Mammary epithelial cell (primary cell): ENCODE measurements at regions of chr4 and their contacts with region 1.

Region 1: GRCh38 chr4:100268789-100269188 is 78.5 kb upstream of the DDIT4L start:
- DNase-seq: no peak
- H3K4me3 ChIP-seq: no peak overlapping the region
- H3K27ac ChIP-seq: no peak overlapping the region
- H3K4me1 ChIP-seq: no peaks in the 10 kb centered on the region
- H3K27me3 ChIP-seq: no peaks in the 10 kb centered on the region
- CTCF ChIP-seq: no peak

Region 2: DNA sequence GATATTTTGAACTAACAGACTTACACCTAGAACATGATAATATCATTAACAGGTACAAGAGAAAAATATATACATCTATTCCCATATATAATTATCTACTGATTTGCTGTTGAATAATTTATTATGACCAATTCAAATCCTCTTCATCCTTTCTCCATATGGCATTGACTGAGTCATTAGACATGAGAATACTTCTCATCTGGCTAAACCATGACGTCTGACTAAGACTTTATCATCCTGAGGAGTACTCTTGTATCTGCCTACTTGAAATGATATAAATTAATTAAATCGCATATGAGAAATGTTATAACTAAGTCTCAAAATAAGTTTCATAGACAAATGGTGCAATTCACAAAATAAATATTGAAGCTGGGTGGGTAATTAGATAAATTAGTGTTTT is 181.7 kb after region 1 on chr4:
- CTCF ChIA-PET with region 1: interaction called, 12 read pairs
- dilution Hi-C with region 1: no loop called
- in situ Hi-C with region 1: no loop called
- intact Hi-C with region 1: no loop called
- DNase-seq: peak; percentile 59
- H3K4me3 ChIP-seq: no peak overlapping the region
- H3K27ac ChIP-seq: no peak overlapping the region
- H3K4me1 ChIP-seq: no peaks in the 10 kb centered on the region
- H3K27me3 ChIP-seq: no peaks in the 10 kb centered on the region
- CTCF ChIP-seq: no peak

Region 3: GRCh38 chr4:101238706-101239105 is 969.9 kb after region 1 on chr4:
- CTCF ChIA-PET with region 1: no interaction called
- dilution Hi-C with region 1: no loop called
- in situ Hi-C with region 1: no loop called
- intact Hi-C with region 1: no loop called
- DNase-seq: peak; percentile 42
- H3K4me3 ChIP-seq: no peak overlapping the region
- H3K27ac ChIP-seq: no peak overlapping the region
- H3K4me1 ChIP-seq: peaks cover 13% of the 10 kb centered on the region
- H3K27me3 ChIP-seq: no peaks in the 10 kb centered on the region
- CTCF ChIP-seq: no peak